ENCODE measurements at regions of chr4 and their contacts with region 1.

Region 1: DNA sequence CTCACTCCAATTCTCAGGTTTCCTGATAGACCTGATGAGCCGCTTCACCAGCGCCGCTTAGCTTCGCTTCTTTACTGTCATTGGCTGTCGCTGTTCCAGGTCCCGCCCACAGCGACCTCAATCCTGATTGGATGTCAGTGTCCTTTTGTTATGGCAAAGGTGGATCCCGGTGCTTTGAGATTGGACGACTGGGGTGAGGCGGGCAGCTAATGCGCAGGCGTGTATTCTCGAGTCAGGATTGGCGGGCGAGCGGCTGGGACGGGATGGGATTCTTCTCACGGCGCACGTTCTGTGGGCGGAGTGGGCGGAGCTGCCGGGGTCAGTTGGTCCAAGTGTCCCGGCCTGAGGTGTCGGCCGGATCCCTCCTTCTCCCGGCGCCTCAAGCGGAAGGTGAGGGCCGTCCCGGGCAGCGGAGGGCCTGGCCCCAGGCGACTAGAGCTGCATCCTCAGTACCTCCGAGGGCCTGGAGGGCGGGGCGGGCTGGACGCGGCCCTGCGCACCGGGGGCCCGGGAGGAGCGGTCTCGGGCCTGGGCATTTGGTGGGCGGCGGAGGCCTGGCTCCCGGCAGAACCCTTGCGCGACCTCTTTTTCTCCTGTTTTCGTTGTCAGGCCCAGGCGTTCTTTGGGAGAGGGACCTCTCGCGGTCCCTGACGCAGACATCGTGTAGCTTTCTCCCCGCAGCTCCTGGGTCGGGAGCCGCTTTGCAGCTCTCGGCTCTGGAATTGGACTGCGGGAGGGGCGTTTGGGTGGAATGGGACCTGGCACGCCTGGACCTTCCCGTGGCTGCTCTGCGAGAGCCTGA is at the start of gene SCOC:
- DNase-seq: peak; percentile 100
- H3K4me3 ChIP-seq: peak within 1 kb of the TSS; percentile 85 to 89
- H3K27ac ChIP-seq: peak within 1 kb of the TSS; percentile 92 to 94
- H3K4me1 ChIP-seq: peaks cover 4% of the 10 kb centered on the region
- H3K27me3 ChIP-seq: no peaks in the 10 kb centered on the region
- CTCF ChIP-seq: no peak
- POLR2A ChIP-seq: peak; percentile 53
- total RNA-seq, gene SCOC: 28.2 to 58.8 TPM

Region 2: GRCh38 chr4:140260227-140260626 is 113.3 kb before region 1 on chr4:
- intact Hi-C with region 1: no loop called
- DNase-seq: no peak
- H3K4me3 ChIP-seq: no peak overlapping the region
- H3K27ac ChIP-seq: no peak overlapping the region
- H3K4me1 ChIP-seq: no peaks in the 10 kb centered on the region
- H3K27me3 ChIP-seq: no peaks in the 10 kb centered on the region
- CTCF ChIP-seq: no peak
- POLR2A ChIP-seq: no peak

Region 3: GRCh38 chr4:140523857-140524742 is 150.6 kb after region 1 on chr4 and contains the start of gene ELMOD2:
- intact Hi-C with region 1: loop called (anchors 10 kb)
- DNase-seq: peak; percentile 97
- H3K4me3 ChIP-seq: peak within 1 kb of the TSS; percentile 67 to 99
- H3K27ac ChIP-seq: peak within 1 kb of the TSS; percentile 65 to 81
- H3K4me1 ChIP-seq: no peaks in the 10 kb centered on the region
- H3K27me3 ChIP-seq: no peaks in the 10 kb centered on the region
- CTCF ChIP-seq: peak; percentile 45 to 94 (median 88)
- POLR2A ChIP-seq: peak; percentile 46
- total RNA-seq, gene ELMOD2: 35.0 to 39.2 TPM

Region 4: GRCh38 chr4:140637836-140638235 is 264.3 kb after region 1 on chr4:
- intact Hi-C with region 1: no loop called
- DNase-seq: no peak
- H3K4me3 ChIP-seq: no peak overlapping the region
- H3K27ac ChIP-seq: no peak overlapping the region
- H3K4me1 ChIP-seq: peaks cover 8% of the 10 kb centered on the region
- H3K27me3 ChIP-seq: no peaks in the 10 kb centered on the region
- CTCF ChIP-seq: peak in 2 of 4 experiments; percentile 21 to 40
- POLR2A ChIP-seq: no peak